ENCODE measurements at regions of chr6 and their contacts with region 1.

Region 1: GRCh38 chr6:1864496-1864895 is 254.8 kb downstream of the FOXC1 start:
- DNase-seq: peak; percentile 28
- ATAC-seq: peak; percentile 70
- H3K4me3 ChIP-seq: no peak overlapping the region
- H3K27ac ChIP-seq: no peak overlapping the region
- H3K4me1 ChIP-seq: peaks cover 27% of the 10 kb centered on the region
- H3K27me3 ChIP-seq: no peaks in the 10 kb centered on the region
- CTCF ChIP-seq: no peak
- EP300 ChIP-seq: no peak
- POLR2A ChIP-seq: no peak
- RAD21 ChIP-seq: no peak

Region 2: DNA sequence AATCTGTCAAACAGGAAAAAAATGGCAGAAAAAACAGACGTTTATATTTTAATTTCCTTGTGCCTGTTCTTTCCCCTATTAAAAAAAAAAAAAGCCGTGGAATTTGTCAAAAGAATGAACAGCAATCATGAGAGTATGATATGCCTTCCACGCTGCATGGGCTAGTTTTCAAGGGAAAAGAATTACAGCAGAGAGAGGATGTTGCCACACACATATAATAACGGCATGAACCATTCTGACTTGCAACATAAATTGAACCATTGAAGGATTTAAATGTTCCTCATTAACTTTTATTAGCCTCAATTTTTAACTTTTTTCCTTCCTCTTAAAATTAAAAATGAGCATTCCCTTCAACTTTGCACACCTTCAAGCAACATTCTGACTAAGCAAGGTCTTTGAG is 47.0 kb after region 1 on chr6:
- CTCF ChIA-PET with region 1: no interaction called
- POLR2A ChIA-PET with region 1: no interaction called
- in situ Hi-C with region 1: no loop called
- intact Hi-C with region 1: loop called (anchors 2 kb)
- DNase-seq: no peak
- ATAC-seq: no peak
- H3K4me3 ChIP-seq: no peak overlapping the region
- H3K27ac ChIP-seq: no peak overlapping the region
- H3K4me1 ChIP-seq: no peaks in the 10 kb centered on the region
- H3K27me3 ChIP-seq: no peaks in the 10 kb centered on the region
- CTCF ChIP-seq: no peak
- EP300 ChIP-seq: no peak
- POLR2A ChIP-seq: no peak
- RAD21 ChIP-seq: no peak

Region 3: GRCh38 chr6:2514965-2515555 is 650.6 kb after region 1 on chr6:
- CTCF ChIA-PET with region 1: no interaction called
- POLR2A ChIA-PET with region 1: no interaction called
- in situ Hi-C with region 1: no loop called
- intact Hi-C with region 1: no loop called
- DNase-seq: peak; percentile 99
- ATAC-seq: peak; percentile 96
- H3K4me3 ChIP-seq: peak overlapping the region; percentile 29 to 43 (median 42)
- H3K27ac ChIP-seq: peak overlapping the region; percentile 67
- H3K4me1 ChIP-seq: peaks cover 36% of the 10 kb centered on the region
- H3K27me3 ChIP-seq: no peaks in the 10 kb centered on the region
- CTCF ChIP-seq: no peak
- EP300 ChIP-seq: peak; percentile 90 to 94
- POLR2A ChIP-seq: 0 out of 4 replicates have a peak, but pooled peaks of 1 of the 2 experiments have one; percentile 25
- RAD21 ChIP-seq: peak; percentile 45; the same call in 1 of the 2 replicates

Measured in HepG2 (cell line).